ENCODE measurements at regions of chr7 and their contacts with region 1.

Region 1: DNA sequence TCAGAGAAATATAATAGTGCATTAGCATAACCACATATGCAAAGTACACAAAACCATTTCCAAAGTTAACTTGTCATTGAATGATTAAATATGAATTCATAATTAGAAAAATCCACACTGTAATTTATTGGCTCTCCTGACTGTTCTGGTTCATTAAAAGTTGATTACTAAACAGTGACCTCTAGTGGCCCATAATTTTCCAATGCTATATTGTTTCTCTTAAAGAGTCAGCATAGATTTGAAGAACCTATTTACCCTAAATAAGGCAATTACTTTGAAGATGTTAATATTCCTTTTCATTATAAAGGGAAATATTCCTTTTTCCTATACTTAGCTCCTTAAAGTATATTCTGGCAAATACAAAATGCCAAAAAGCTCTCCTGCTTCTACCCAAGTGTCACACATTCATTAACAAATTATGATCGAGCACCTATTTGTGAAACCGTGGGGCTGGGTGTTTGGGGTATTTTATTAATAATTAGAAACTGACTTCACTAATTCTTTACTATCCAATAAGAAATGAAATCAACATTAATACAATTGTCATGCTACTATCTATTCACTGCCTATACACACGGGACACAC is 86.2 kb downstream of the HIBADH start:
- DNase-seq: no peak
- ATAC-seq: peak; percentile 49
- H3K4me3 Mint-ChIP-seq: no peak overlapping the region
- H3K27ac Mint-ChIP-seq: no peak overlapping the region
- H3K4me1 Mint-ChIP-seq: no peaks in the 10 kb centered on the region
- H3K27me3 Mint-ChIP-seq: no peaks in the 10 kb centered on the region

Region 2: GRCh38 chr7:27210441-27211083 is 365.9 kb before region 1 on chr7:
- CTCF ChIA-PET with region 1: interaction called, 10 read pairs
- POLR2A ChIA-PET with region 1: no interaction called
- DNase-seq: peak; percentile 60
- ATAC-seq: no peak
- H3K4me3 Mint-ChIP-seq: no peak overlapping the region
- H3K27ac Mint-ChIP-seq: no peak overlapping the region
- H3K4me1 Mint-ChIP-seq: peaks cover 9% of the 10 kb centered on the region
- H3K27me3 Mint-ChIP-seq: peaks cover 82% of the 10 kb centered on the region

Measured in activated CD8-positive, alpha-beta T cell treated with anti-CD3 and anti-CD28 coated beads, Interleukin-2, amount 10 ng/mL, durations not matched to agents 7 days and 5 days (primary cell).